Endothelial cell of umbilical vein (primary cell): ENCODE measurements at regions of chr13 and their contacts with region 1.

Region 1: DNA sequence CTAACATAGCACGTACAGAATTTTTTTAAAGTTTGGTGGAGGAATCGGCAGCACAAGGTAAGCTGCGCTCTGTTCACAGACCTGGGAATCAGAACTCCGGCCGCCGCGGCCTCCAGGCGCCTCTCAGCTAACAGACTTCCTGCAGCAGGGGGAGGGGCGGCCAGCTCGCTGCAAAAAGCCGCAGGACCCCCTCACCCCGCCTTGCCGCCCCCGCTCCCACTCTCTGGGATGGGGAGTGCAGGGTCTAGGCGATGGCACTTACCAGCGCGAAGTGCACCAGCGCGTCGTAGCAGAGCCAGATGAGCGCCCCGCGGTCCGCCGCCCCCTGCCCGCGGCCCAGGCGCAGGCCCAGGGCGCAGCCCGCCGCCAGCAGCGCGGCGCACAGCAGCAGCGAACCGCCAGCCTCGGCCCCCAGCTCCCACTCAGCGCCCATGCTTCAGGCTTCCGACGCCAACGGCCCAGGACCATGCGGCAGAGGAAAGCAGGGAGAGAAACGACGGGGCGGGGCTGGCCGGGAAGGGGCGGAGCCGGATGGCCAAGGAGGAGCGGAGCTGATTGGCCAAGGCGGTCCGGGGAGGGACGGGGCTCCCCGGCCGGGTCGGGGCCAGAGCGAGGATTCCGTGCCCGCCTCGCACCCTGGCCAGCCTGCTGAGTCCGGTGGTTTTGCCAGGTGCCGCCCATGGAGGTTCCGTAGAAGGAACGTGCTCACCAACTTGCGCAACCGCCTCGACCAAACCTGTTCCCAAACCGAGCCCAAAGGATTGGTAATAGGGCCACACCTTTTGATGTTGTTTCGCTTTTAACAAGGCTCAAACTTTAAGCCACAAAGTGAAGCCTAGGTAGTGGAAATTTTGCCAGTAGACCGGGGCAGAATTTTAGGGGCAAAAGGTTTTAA is at the start of gene EBPL:
- DNase-seq: peak; percentile 92
- H3K4me3 ChIP-seq: peak within 1 kb of the TSS; percentile 72 to 90 (median 85)
- H3K27ac ChIP-seq: peak within 1 kb of the TSS; percentile 41
- H3K4me1 ChIP-seq: peaks cover 10% of the 10 kb centered on the region
- H3K27me3 ChIP-seq: no peaks in the 10 kb centered on the region
- CTCF ChIP-seq: no peak
- POLR2A ChIP-seq: peak; percentile 84
- total RNA-seq, gene EBPL: 66.2 and 75.5 TPM in 2 replicates

Region 2: DNA sequence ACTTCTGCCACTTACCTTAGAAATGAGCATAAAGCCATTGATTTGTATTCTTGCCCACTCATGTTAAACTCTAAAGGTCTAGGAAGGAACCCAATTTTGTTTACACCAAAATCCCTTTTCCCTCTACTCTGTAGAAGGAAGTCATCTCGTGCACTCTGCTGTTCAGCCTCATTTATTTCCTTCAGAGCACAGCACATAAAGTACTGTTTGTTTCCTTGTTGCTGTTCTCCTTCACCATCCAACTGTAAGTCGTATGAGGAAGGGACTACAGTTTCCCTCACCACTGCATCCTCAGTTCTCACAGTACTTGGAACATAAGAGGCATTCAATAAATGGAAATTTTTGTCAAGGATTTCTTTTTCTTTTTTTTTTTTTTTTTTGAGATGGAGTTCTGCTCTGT is 418.9 kb before region 1 on chr13:
- CTCF ChIA-PET with region 1: no interaction called
- POLR2A ChIA-PET with region 1: no interaction called
- dilution Hi-C with region 1: no loop called
- intact Hi-C with region 1: no loop called
- DNase-seq: no peak
- H3K4me3 ChIP-seq: no peak overlapping the region
- H3K27ac ChIP-seq: no peak overlapping the region
- H3K4me1 ChIP-seq: no peaks in the 10 kb centered on the region
- H3K27me3 ChIP-seq: no peaks in the 10 kb centered on the region
- CTCF ChIP-seq: no peak
- POLR2A ChIP-seq: no peak

Region 3: DNA sequence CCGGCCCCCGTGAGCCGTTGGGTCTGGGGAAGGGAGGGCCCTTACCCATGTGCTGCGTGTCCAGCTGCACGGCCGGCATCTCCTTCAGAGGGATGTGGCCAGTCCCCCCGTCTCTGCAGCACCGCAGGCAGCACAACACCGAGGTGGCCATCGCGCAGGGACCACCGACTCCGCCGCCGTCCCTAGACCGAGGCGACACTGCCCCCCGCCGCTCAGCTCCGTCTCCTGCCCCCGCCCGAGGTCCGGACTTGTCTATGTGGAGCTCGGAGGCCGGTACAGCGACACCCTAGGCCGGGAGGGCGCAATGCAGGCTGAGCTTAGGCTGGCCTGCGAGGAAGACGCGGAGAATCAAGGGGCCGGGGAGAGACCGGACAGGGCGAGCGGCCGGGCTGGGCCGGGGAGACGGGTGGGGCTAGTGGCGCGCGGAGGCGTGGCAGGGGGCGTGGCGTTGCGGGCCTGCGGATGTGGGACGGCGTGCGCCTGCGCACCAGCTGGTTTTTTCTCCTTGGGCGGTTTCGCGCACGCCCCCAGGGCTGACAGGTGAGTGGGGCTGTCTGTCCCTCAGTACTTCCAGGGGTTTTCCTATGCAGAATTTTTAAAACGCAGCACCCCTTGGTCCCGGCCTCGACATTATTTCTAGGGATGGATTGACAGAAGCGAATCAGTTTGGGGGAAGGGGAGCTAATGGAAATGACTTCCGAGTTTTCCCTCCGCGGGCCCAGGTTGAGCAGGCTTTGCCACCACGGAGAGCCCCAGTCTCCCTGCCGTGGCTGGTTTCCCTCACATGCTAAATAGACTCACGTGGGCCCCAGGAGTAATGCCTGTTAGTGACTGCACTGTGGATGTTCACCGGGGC is 245.1 kb after region 1 on chr13 and contains the start of gene SPRYD7:
- CTCF ChIA-PET with region 1: no interaction called
- POLR2A ChIA-PET with region 1: no interaction called
- dilution Hi-C with region 1: no loop called
- intact Hi-C with region 1: loop called (anchors 1 kb)
- DNase-seq: peak; percentile 99
- H3K4me3 ChIP-seq: peak within 1 kb of the TSS; percentile 69 to 82 (median 79)
- H3K27ac ChIP-seq: peak within 1 kb of the TSS; percentile 21
- H3K4me1 ChIP-seq: peaks cover 8% of the 10 kb centered on the region
- H3K27me3 ChIP-seq: no peaks in the 10 kb centered on the region
- CTCF ChIP-seq: peak; percentile 90 to 95
- POLR2A ChIP-seq: peak; percentile 70
- total RNA-seq, gene SPRYD7: 7.0 and 7.5 TPM in 2 replicates

Region 4: GRCh38 chr13:50015258-50015657 is 324.0 kb after region 1 on chr13 and contains the start of gene KCNRG:
- CTCF ChIA-PET with region 1: no interaction called
- POLR2A ChIA-PET with region 1: no interaction called
- dilution Hi-C with region 1: no loop called
- intact Hi-C with region 1: no loop called
- DNase-seq: peak; percentile 67
- H3K4me3 ChIP-seq: no peak within 1 kb of the TSS
- H3K27ac ChIP-seq: no peak within 1 kb of the TSS
- H3K4me1 ChIP-seq: peaks cover 8% of the 10 kb centered on the region
- H3K27me3 ChIP-seq: no peaks in the 10 kb centered on the region
- CTCF ChIP-seq: no peak
- POLR2A ChIP-seq: no peak
- total RNA-seq, gene KCNRG: 0.83 and 0.86 TPM in 2 replicates